Activated T-helper 1 cell treated with anti-CD3 and anti-CD28 coated beads, Interleukin-12 subunit alpha, Interleukin-12 subunit beta, Interleukin-2, Interleukin-4 antibody, amounts not matched to agents 30 ng/mL and 10 ng/mL and 1 ng/mL, durations not matched to agents 14 hours and 24 hours and 36 hours (primary cell): ENCODE measurements at regions of chr16 and their contacts with region 1.

Region 1: DNA sequence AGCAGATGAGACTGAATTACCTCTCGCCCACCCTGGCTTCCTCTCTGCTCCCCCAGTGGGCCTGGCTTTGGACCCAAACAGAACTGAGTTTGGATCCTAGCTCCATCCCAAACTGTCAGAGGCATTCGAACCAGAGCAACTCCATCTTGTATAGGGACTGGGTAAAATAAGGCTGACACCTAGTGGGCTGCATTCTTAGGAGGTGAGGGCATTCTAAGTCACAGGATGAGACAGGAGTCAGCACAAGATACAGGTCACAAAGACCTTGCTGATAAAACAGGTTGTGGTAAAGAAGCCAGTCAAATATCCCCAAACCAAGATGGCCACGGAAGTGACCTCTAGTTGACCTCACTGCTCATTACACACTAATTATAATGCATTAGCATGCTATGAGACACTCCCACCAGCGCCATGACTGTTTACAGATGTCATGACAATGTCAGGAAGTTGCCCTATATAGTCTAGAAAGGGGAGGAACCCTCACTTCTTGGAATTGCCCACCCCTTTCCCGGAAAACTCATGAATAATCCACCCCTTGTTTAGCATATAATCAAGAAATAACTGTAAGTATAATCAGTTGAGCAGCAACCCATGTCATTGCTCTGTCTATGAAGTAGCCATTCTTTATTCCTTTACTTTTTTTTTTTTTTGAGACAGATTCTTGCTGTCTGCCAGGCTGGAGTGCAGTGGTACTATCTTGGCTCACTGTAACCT is 44.4 kb downstream of the LYRM1 start:
- DNase-seq: peak; percentile 57
- H3K4me3 Mint-ChIP-seq: no peak overlapping the region
- H3K27ac Mint-ChIP-seq: peak overlapping the region; percentile 71
- H3K4me1 Mint-ChIP-seq: peaks cover 50% of the 10 kb centered on the region
- H3K27me3 Mint-ChIP-seq: no peaks in the 10 kb centered on the region

Region 2: GRCh38 chr16:20874088-20874581 is 70.9 kb before region 1 on chr16:
- intact Hi-C with region 1: loop called (anchors 2 kb)
- DNase-seq: no peak
- H3K4me3 Mint-ChIP-seq: peak overlapping the region; percentile 58
- H3K27ac Mint-ChIP-seq: peak overlapping the region; percentile 83
- H3K4me1 Mint-ChIP-seq: peaks cover 84% of the 10 kb centered on the region
- H3K27me3 Mint-ChIP-seq: peaks cover 2% of the 10 kb centered on the region